ENCODE measurements at regions of chr12 and their contacts with region 1.

Region 1: GRCh38 chr12:7108796-7109571 is at the start of gene C1RL:
- ATAC-seq: peak; percentile 32 to 69 (median 60)
- H3K4me3 ChIP-seq: peak within 1 kb of the TSS; percentile 22 to 38 (median 30)
- H3K27ac ChIP-seq: peak within 1 kb of the TSS; percentile 34 to 37
- H3K4me1 ChIP-seq: peaks cover 5 to 12% of the 10 kb centered on the region in 2 donors
- total RNA-seq, gene C1RL: 1.5 to 61.5 (median 11.1) TPM

Region 2: DNA sequence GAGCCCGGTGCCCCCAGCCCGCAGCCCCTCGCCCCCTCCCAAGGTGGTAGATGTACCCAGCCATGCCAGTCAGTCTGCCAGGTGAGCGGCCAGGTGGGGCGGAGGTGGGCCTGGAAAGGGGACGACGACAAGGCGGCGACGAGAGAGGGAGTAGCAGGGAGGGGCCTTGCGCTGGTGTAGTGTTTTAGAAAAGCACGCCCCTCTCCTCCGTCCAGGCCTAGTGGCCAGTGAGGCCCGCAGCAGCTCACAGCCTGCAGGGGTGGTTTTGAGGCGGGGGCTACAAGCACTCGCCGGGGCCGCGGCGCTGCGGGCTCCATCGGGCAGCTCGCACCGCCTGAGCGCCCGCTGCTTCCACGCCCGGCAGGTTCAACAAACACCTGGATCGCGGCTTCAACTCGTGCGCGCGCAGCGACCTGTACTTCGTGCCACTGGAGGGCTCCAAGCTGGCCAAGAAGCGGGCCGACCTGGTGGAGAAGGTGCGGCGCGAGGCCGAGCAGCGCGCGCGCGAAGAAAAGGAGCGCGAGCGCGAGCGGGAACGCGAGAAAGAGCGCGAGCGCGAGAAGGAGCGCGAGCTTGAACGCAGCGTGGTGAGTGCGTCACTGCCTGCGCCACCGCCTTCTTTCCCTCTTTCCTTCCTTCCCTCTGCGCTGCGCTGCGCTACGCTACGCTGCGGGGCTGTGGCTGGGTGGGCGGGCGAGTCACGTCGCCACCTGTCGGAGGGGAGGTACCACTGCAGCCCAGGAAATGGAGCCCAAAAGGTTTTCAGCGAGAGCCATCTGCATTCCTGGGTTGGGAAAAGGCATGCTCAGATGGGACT is 171.3 kb before region 1 on chr12:
- in situ Hi-C with region 1: loop called in 2 of 9 experiments (anchors 25 kb)
- ATAC-seq: peak; percentile 92 to 97 (median 94)
- H3K4me3 ChIP-seq: peak overlapping the region; percentile 39 to 65 (median 60)
- H3K27ac ChIP-seq: peak overlapping the region; percentile 92 to 97
- H3K4me1 ChIP-seq: peaks cover 11 to 13% of the 10 kb centered on the region in 2 donors

Region 3: DNA sequence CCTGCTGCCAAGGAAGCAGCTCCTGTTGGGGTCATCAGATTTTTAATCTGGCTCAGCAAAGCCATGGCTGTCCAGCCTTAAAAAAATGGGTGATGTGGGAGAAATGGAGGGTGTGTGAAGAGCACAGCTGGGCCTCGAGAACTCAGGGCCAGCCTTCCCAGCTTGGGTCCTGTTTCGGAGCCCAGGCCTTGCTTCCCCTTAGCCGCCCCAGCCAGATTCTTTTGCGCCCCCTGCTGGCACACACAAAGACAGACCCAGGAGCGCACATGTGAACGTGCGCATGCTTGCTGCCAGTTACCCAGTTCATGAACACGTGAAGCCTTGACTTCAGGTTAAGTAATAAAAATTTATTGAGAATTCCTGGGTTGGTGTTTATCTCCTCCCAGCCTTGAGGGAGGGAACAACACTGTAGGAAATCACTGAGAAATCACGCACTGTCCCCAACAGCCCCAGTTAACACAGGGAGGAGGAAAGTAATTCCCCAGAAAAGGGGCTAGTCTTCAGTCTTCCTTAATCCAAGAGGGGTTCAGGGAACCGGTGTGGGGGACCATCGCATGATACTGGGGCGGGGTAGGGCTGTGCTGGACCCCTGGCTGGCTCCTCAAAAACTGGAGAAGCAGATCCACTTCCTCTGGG is 143.8 kb before region 1 on chr12:
- in situ Hi-C with region 1: loop called in 1 of 9 experiments (anchors 25 kb)
- ATAC-seq: peak; percentile 31 to 80 (median 78)
- H3K4me3 ChIP-seq: no peak overlapping the region
- H3K27ac ChIP-seq: peak overlapping the region in 1 of 2 donors; percentile 35
- H3K4me1 ChIP-seq: peaks cover 22 to 45% of the 10 kb centered on the region in 2 donors